B cell (primary cell): ENCODE measurements at regions of chr9 and their contacts with region 1.

Region 1: DNA sequence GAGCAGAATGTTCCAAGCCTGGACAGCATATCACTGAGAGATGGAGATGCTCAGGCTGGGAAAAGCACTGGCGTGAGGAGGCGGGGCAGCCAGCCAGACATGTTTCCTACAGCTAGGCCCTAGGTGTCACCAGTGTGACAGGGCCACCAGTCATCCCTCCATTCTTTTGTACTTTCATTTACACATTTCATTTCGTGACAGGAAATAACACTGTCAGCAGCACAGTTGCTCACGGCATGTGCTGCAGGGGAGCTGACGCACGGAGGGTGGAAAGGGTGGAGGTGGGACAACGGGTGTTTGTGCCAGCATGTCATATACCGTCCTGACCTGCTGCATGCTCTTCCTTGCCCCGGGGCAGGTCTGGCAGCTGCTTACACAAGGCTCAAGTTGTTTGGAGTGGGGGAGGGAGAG is 14.8 kb upstream of the CEMIP2 start:
- DNase-seq: peak; percentile 90
- ATAC-seq: peak; percentile 93
- H3K4me3 ChIP-seq: peak overlapping the region in 3 of 5 experiments; percentile 6 to 22 (median 19)
- H3K4me3 Mint-ChIP-seq: peak overlapping the region; percentile 74
- H3K27ac ChIP-seq: peak overlapping the region; percentile 77 to 85
- H3K27ac Mint-ChIP-seq: peak overlapping the region; percentile 93
- H3K4me1 ChIP-seq: peaks cover 30 to 32% of the 10 kb centered on the region in 2 donors
- H3K4me1 Mint-ChIP-seq: peaks cover 44% of the 10 kb centered on the region
- H3K27me3 ChIP-seq: no peaks in the 10 kb centered on the region
- H3K27me3 Mint-ChIP-seq: no peaks in the 10 kb centered on the region
- CTCF ChIP-seq: peak; percentile 48

Region 2: DNA sequence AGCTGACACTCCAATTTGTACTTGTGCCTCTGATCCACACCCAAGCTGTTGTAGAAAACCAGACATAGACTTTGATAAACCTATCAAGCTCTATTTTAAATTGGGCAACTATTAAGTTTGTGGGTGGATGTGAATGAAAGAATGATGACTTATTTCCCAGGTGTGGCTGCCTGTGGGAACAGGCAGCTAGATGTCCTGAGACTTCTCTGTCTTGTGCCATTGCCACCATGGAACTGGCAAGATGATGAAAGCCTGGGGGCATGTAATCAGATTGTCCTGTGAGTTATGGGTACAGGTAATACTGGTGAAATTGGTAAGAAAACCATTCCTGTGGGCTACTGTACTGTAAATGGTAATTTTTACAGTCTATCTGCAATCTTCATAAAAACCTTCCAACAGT is 72.3 kb before region 1 on chr9:
- CTCF ChIA-PET with region 1: no interaction called
- POLR2A ChIA-PET with region 1: no interaction called
- intact Hi-C with region 1: no loop called
- DNase-seq: no peak
- ATAC-seq: no peak
- H3K4me3 ChIP-seq: no peak overlapping the region
- H3K4me3 Mint-ChIP-seq: no peak overlapping the region
- H3K27ac ChIP-seq: peak overlapping the region in 1 of 2 donors; percentile 30
- H3K27ac Mint-ChIP-seq: no peak overlapping the region
- H3K4me1 ChIP-seq: no peaks in the 10 kb centered on the region
- H3K4me1 Mint-ChIP-seq: no peaks in the 10 kb centered on the region
- H3K27me3 ChIP-seq: no peaks in the 10 kb centered on the region
- H3K27me3 Mint-ChIP-seq: no peaks in the 10 kb centered on the region
- CTCF ChIP-seq: no peak

Region 3: DNA sequence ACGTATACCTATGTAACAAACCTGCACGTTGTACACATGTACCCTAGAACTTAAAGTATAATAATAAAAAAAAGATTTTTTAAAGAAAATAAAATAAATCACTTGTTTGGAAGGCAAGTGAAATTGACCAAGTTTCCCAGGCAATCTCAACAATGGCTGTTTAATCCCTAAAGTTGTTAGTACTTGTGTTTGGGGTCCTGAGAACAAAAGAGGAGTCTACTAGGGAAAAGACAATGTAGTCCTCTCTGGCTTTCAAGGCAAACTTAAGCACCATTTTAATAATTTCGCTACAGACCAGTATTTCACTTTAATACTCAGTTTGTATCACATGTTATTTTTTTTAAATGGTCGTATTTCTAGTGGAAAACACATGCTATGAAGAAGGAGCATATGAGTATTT is 29.0 kb before region 1 on chr9:
- CTCF ChIA-PET with region 1: no interaction called
- POLR2A ChIA-PET with region 1: no interaction called
- intact Hi-C with region 1: no loop called
- DNase-seq: no peak
- ATAC-seq: no peak
- H3K4me3 ChIP-seq: no peak overlapping the region
- H3K4me3 Mint-ChIP-seq: no peak overlapping the region
- H3K27ac ChIP-seq: no peak overlapping the region
- H3K27ac Mint-ChIP-seq: no peak overlapping the region
- H3K4me1 ChIP-seq: peaks cover 18 to 21% of the 10 kb centered on the region in 2 donors
- H3K4me1 Mint-ChIP-seq: peaks cover 55% of the 10 kb centered on the region
- H3K27me3 ChIP-seq: no peaks in the 10 kb centered on the region
- H3K27me3 Mint-ChIP-seq: no peaks in the 10 kb centered on the region
- CTCF ChIP-seq: no peak

Region 4: DNA sequence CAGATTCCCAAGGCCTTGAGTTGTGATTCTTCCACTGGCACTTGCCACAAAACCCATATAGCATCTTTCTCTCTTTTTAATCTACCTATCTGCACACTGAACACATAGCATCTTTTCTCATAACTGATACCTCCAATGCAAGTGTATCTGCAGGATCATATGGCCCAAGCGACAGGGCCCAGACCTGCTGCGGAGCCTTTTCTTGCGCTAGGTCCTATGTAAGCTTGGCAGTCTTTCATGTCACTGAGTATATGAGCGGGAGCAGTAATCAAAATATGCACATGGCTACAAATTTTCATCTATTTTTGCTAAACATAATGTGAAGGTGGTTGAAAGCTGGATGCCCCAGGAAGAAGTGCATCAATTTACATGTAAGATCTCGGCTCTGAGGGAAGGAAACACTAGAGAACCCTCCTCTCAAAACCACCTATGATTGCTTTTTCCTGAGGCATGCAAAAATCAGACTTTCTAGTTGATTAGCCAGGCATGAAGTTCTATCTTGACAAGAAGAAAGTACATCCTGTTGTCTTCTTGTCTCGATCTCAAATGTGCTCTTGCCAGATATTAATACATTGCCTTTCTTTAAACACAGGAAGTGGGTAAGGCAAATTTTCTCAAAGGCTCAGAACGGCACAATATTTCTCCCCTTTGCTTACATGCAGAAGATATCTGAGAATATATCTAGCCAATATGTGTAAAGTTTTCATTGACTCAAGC is 12.1 kb after region 1 on chr9:
- CTCF ChIA-PET with region 1: interaction called, 73 read pairs
- POLR2A ChIA-PET with region 1: interaction called, 15 read pairs
- intact Hi-C with region 1: loop called (anchors 1 kb)
- DNase-seq: peak; percentile 87
- ATAC-seq: peak; percentile 87
- H3K4me3 ChIP-seq: peak overlapping the region in 1 of 5 experiments; percentile 40
- H3K4me3 Mint-ChIP-seq: peak overlapping the region; percentile 92
- H3K27ac ChIP-seq: peak overlapping the region; percentile 84 to 92
- H3K27ac Mint-ChIP-seq: peak overlapping the region; percentile 93
- H3K4me1 ChIP-seq: peaks cover 77 to 80% of the 10 kb centered on the region in 2 donors
- H3K4me1 Mint-ChIP-seq: peaks cover 70% of the 10 kb centered on the region
- H3K27me3 ChIP-seq: no peaks in the 10 kb centered on the region
- H3K27me3 Mint-ChIP-seq: no peaks in the 10 kb centered on the region
- CTCF ChIP-seq: no peak